PC-9 (cell line): ENCODE measurements at regions of chr1 and their contacts with region 1.

Region 1: DNA sequence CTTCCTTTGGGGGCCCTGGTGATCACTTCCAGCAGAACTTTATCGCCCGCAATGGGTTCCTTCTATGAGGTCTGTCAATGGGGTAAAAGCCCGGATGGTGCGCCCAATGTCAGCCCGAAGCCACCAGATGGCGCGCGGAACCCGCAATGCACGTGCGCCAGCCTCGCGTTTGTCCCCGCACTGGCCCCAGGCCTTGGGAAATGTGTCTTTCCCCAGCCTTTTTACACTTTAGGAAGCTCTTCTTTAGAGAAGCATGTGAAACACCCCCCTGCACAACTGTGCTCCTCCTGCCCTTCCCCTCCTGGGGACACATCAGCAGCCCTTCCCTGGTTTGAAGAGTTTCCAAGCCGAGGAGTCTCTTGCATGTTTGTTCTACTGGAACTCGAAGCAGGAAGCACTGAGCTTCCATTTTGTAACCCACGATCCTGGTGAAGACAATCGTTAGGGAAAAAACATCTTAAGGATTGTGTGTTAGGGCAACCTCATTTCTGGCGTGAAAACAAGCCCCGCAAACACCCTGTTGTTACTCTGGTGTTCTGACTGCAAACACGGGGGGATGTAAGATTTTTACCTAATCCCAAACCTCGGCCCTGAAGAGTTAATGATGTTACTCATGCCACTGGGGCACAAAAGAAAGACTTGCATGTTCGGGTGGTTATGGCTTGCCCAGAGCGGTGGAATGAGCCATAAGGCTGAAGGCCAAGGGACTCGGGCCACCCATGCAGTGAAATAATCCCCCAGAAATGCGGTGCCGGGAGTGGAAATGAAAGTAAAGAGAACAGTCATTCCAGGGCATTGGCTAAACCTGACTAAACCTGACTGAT is 20.4 kb upstream of the TARBP1 start:
- DNase-seq: peak; percentile 75 to 92
- H3K4me3 ChIP-seq: peak overlapping the region; percentile 16; the same call in 1 of the 2 replicates
- H3K27ac ChIP-seq: peak overlapping the region; percentile 85
- H3K4me1 ChIP-seq: peaks cover 90% of the 10 kb centered on the region
- H3K27me3 ChIP-seq: no peaks in the 10 kb centered on the region
- CTCF ChIP-seq: peak; percentile 95

Region 2: GRCh38 chr1:234486498-234487448 is 12.6 kb before region 1 on chr1:
- CTCF ChIA-PET with region 1: interaction called, 25 read pairs
- POLR2A ChIA-PET with region 1: interaction called, 6 read pairs
- intact Hi-C with region 1: no loop called
- DNase-seq: peak; percentile 49 to 73
- H3K4me3 ChIP-seq: no peak overlapping the region
- H3K27ac ChIP-seq: 0 out of 2 replicates have a peak overlapping the region, but pooled peaks have one; percentile 26
- H3K4me1 ChIP-seq: peaks cover 35% of the 10 kb centered on the region
- H3K27me3 ChIP-seq: no peaks in the 10 kb centered on the region
- CTCF ChIP-seq: peak; percentile 71

Region 3: DNA sequence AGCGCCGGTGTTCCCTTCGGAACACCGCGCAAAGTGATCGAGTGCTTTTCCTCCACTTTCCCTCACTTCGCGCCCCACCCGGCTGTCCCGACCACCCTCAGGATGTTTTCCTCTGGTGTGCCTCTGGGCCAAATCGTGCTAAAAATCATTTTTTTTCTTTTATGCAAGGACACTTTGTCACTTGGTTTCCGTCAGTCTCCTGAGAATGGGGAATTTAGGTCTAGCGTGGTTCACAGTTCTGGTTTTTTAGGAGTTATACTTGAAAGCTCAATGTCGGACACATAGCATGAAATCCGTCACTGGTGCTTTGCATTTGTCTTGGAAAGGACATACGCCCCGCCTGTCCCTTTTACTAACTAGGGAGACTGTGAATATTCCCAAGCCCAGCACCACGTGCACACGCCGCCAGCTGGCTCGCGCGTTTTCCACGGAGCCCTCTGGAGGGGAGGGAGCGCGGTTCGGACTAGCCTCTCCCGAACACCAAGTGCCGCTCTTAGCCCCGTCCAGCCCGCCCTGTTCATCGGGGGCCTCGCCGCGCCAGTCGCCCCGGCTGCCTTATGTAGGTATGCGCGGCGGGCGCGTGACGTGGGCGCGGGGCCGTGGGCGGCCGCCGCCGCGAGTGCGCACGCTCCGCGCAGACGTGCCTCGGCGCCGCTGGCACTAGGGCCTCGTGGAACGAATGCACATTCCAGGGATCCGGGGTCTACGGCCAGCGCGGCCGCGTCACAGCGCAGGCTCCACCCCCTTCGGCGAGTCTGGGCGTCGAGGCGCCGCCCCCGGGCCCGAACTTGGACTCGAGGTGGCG is 111.2 kb after region 1 on chr1:
- CTCF ChIA-PET with region 1: interaction called, 8 read pairs
- POLR2A ChIA-PET with region 1: interaction called, 18 read pairs
- intact Hi-C with region 1: loop called (anchors 1 kb)
- DNase-seq: peak; percentile 72 to 93
- H3K4me3 ChIP-seq: peak overlapping the region; percentile 91
- H3K27ac ChIP-seq: peak overlapping the region; percentile 100
- H3K4me1 ChIP-seq: peaks cover 38% of the 10 kb centered on the region
- H3K27me3 ChIP-seq: no peaks in the 10 kb centered on the region
- CTCF ChIP-seq: no peak

Region 4: DNA sequence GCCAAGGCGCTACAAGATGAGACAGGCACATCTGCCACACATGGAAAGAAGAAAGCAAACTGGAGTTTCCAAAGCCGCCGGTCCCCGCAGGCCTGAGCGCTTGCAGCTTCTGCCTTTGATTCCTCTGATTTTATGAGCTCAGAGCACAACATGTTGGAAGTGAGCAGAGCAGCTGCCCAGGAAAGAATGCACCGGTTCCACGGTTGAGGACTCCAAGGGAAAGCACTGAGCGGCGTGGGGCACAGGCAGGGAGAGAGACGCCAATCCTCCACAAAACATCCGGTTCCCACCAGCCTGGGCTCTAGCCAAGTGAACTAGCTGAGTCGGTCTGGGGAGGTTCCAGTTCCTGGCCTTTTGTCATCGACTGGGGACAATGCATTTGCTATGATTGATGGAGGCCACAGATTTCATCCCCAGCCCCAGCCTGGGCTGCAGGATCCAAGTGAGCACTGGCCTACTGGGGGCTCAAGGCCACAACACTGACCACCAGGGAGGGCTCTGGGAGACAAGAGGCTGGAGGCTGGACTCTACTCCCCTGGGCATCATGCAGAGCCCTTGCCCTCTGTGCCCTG is 363.7 kb after region 1 on chr1:
- CTCF ChIA-PET with region 1: interaction called, 8 read pairs
- POLR2A ChIA-PET with region 1: interaction called, 4 read pairs
- intact Hi-C with region 1: loop called (anchors 2 kb)
- DNase-seq: no peak
- H3K4me3 ChIP-seq: no peak overlapping the region
- H3K27ac ChIP-seq: no peak overlapping the region
- H3K4me1 ChIP-seq: peaks cover 56% of the 10 kb centered on the region
- H3K27me3 ChIP-seq: no peaks in the 10 kb centered on the region
- CTCF ChIP-seq: no peak

Region 5: DNA sequence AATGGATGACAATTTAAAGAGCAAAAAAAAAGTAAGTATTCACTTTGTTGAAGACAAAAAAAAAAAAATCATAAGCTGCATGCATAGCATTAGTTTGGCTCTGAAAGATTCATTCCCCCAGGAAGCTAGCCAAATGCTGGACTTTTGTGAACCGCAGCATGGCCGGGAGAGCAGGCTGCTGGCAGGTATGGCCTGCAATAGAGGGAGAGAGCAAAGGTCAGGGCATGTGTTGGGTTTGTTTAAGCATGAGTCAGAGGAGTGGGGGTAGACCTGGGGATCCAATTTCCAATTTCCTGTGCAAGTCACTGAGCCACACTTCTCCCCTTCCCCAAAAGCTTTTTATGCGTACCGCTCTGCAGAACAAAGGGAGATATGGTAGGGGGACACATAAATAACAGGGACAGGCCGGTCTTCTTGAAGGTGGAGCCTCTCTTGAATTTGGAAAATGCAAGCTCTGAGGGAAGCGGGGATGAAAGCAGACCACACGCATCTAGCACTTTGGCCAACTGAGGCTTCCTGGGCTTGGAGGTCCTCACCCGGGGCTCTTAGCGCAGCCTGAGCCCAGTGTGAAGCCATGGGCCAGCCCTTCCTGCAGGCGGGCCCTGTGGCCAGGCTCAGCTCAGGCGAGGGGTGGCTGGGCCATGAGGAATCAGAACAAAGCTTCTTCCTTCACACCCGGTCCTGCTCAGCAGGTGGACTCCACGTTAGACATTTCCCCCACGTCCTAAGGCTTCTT is 458.2 kb after region 1 on chr1:
- CTCF ChIA-PET with region 1: interaction called, 3 read pairs
- POLR2A ChIA-PET with region 1: no interaction called
- intact Hi-C with region 1: loop called (anchors 1 kb)
- DNase-seq: peak; percentile 91 to 96
- H3K4me3 ChIP-seq: peak overlapping the region; percentile 37; the same call in 1 of the 2 replicates
- H3K27ac ChIP-seq: peak overlapping the region; percentile 99
- H3K4me1 ChIP-seq: peaks cover 82% of the 10 kb centered on the region
- H3K27me3 ChIP-seq: no peaks in the 10 kb centered on the region
- CTCF ChIP-seq: no peak

Region 6: GRCh38 chr1:235011599-235012435 is 512.5 kb after region 1 on chr1:
- CTCF ChIA-PET with region 1: interaction called, 5 read pairs
- POLR2A ChIA-PET with region 1: interaction called, 15 read pairs
- intact Hi-C with region 1: loop called (anchors 1 kb)
- DNase-seq: peak; percentile 89 to 98
- H3K4me3 ChIP-seq: peak overlapping the region; percentile 28; the same call in 1 of the 2 replicates
- H3K27ac ChIP-seq: peak overlapping the region; percentile 98
- H3K4me1 ChIP-seq: peaks cover 35% of the 10 kb centered on the region
- H3K27me3 ChIP-seq: no peaks in the 10 kb centered on the region
- CTCF ChIP-seq: no peak

Region 7: GRCh38 chr1:235504496-235505222 is 1005.3 kb after region 1 on chr1:
- CTCF ChIA-PET with region 1: no interaction called
- POLR2A ChIA-PET with region 1: no interaction called
- intact Hi-C with region 1: loop called (anchors 2 kb)
- DNase-seq: peak; percentile 93 to 100
- H3K4me3 ChIP-seq: peak overlapping the region; percentile 77
- H3K27ac ChIP-seq: peak overlapping the region; percentile 97
- H3K4me1 ChIP-seq: peaks cover 38% of the 10 kb centered on the region
- H3K27me3 ChIP-seq: no peaks in the 10 kb centered on the region
- CTCF ChIP-seq: peak; percentile 86